Testis (tissue), 5 donors: ENCODE measurements at regions of chr14 and their contacts with region 1.

Region 1: GRCh38 chr14:29654901-29655550 is 272.6 kb downstream of the PRKD1 start:
- DNase-seq: no peak
- H3K4me3 ChIP-seq: no peak overlapping the region
- H3K27ac ChIP-seq: peak overlapping the region in 1 of 2 donors; percentile 46
- H3K4me1 ChIP-seq: peaks cover 30% of the 10 kb centered on the region
- H3K27me3 ChIP-seq: no peaks in the 10 kb centered on the region
- CTCF ChIP-seq: no peak
- POLR2A ChIP-seq: no peak

Region 2: DNA sequence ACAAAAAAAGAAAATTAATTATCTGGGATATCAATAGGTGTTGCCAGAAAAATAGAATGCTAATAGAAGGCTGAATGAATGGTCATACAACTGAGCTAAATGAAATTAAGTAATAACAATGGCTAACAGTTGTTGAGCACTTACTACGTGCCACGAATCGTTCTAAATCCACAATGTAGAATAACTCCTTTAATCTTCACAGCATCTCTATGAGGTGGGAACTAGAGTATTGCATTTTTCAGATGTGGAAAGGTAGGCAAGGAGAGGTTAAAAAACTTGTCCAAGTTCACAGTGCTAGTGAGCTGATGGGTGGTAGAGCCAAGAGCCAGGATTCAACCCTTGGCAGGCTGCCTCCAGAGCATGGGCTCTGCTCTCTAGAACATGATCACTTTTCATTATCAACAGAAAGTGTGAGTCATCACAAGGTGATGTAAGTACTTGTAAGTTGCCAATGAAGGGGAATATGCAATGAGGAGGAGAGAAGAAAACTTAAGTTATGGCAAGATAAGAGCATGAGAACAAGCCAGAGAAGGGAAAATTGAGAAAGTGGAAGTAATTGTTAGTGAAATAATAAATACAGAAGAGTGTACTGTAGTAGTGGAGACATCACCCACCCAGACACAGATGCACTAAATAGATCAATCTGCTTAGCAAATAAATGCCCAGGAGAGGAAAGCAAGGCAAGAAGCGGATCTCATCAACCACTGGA is 150.5 kb after region 1 on chr14:
- intact Hi-C with region 1: no loop called
- DNase-seq: peak; percentile 56
- H3K4me3 ChIP-seq: no peak overlapping the region
- H3K27ac ChIP-seq: no peak overlapping the region
- H3K4me1 ChIP-seq: peaks cover 8% of the 10 kb centered on the region
- H3K27me3 ChIP-seq: no peaks in the 10 kb centered on the region
- CTCF ChIP-seq: no peak
- POLR2A ChIP-seq: no peak

Region 3: GRCh38 chr14:29927376-29928116 is 272.5 kb after region 1 on chr14 and contains the start of gene PRKD1:
- intact Hi-C with region 1: loop called (anchors 10 kb)
- DNase-seq: peak; percentile 80
- H3K4me3 ChIP-seq: peak within 1 kb of the TSS; percentile 79 to 83
- H3K27ac ChIP-seq: peak within 1 kb of the TSS; percentile 70 to 88
- H3K4me1 ChIP-seq: peaks cover 10% of the 10 kb centered on the region
- H3K27me3 ChIP-seq: no peaks in the 10 kb centered on the region
- CTCF ChIP-seq: peak in 1 of 3 experiments; percentile 21
- POLR2A ChIP-seq: no peak
- total RNA-seq, gene PRKD1: 67.2 to 82.9 TPM